A673 (cell line): ENCODE measurements at regions of chr2 and their contacts with region 1.

Region 1: DNA sequence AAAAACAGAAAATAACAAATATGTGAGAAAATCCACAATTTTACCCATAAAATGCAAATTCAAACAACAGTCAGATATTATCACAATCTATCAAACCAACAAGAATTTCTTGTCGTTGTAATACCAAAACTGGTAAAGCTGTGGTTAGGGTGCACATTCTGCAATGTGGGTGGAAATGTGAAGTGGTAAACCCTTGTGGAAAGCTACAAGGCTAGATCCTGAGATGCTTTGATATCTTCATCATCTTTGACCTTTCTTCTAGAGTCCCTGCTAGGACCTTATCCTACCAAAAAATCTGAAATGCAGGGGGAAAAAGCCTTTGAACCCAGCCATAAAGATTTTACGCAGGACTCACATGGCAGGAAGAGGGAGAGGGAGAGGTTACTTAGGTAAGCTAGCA is 17.2 kb upstream of the ATG16L1 start:
- DNase-seq: no peak
- H3K4me3 ChIP-seq: no peak overlapping the region
- H3K27ac ChIP-seq: no peak overlapping the region
- H3K4me1 ChIP-seq: no peaks in the 10 kb centered on the region
- H3K27me3 ChIP-seq: no peaks in the 10 kb centered on the region
- CTCF ChIP-seq: no peak

Region 2: DNA sequence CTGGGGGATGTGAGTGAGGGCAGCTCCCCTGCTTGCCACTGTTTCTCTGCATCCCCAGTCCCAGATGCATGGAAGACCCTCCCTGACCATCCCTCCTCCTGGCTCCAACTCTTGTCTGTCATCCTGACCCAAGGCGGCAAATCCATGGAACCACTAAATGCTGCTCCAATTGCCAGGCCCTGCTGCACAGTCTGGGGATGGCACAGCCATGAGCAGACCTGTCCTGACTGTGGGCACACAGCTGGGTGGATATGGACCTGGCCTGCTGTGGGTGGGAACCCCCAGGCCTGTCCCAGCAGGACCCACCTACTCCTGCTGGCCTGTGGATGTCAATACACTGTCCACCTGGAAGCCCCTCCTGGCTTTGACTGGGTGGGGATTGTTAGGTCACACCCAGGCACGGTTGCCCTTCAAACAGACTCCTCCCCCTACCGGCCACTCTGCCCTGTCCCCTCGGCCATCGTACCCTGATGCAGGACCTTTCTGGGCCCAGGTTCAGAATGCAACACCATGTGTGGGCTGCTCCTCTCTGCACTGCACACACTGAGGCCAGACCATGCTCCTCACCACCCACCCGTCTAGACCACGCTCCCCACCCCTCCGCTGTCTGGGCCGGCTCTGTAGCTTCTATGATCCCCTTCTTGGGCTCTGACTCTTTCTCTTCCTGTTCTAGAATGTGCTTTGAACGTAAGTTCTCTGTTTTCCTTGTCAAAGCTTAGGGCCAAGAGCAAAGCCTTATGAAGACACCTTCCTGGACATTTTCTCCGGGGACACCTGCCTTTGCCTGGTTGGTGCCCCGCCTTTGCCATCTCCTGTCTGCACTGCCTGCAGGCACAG is 116.2 kb before region 1 on chr2:
- CTCF ChIA-PET with region 1: no interaction called
- POLR2A ChIA-PET with region 1: no interaction called
- intact Hi-C with region 1: loop called (anchors 5 kb)
- DNase-seq: no peak
- H3K4me3 ChIP-seq: no peak overlapping the region
- H3K27ac ChIP-seq: no peak overlapping the region
- H3K4me1 ChIP-seq: no peaks in the 10 kb centered on the region
- H3K27me3 ChIP-seq: no peaks in the 10 kb centered on the region
- CTCF ChIP-seq: no peak

Region 3: GRCh38 chr2:233584210-233584729 is 350.0 kb after region 1 on chr2:
- CTCF ChIA-PET with region 1: no interaction called
- POLR2A ChIA-PET with region 1: no interaction called
- intact Hi-C with region 1: no loop called
- DNase-seq: no peak
- H3K4me3 ChIP-seq: no peak overlapping the region
- H3K27ac ChIP-seq: no peak overlapping the region
- H3K4me1 ChIP-seq: no peaks in the 10 kb centered on the region
- H3K27me3 ChIP-seq: no peaks in the 10 kb centered on the region
- CTCF ChIP-seq: no peak